Endothelial cell of umbilical vein (primary cell): ENCODE measurements at regions of chr11 and their contacts with region 1.

Region 1: GRCh38 chr11:32615422-32615821 is 31.8 kb downstream of the EIF3M start:
- DNase-seq: peak; percentile 17
- H3K4me3 ChIP-seq: no peak overlapping the region
- H3K27ac ChIP-seq: no peak overlapping the region
- H3K4me1 ChIP-seq: no peaks in the 10 kb centered on the region
- H3K27me3 ChIP-seq: no peaks in the 10 kb centered on the region
- CTCF ChIP-seq: no peak
- POLR2A ChIP-seq: no peak

Region 2: GRCh38 chr11:32323814-32324130 is 291.6 kb before region 1 on chr11:
- CTCF ChIA-PET with region 1: interaction called, 17 read pairs
- POLR2A ChIA-PET with region 1: no interaction called
- dilution Hi-C with region 1: no loop called
- intact Hi-C with region 1: loop called (anchors 2 kb)
- DNase-seq: no peak
- H3K4me3 ChIP-seq: no peak overlapping the region
- H3K27ac ChIP-seq: no peak overlapping the region
- H3K4me1 ChIP-seq: no peaks in the 10 kb centered on the region
- H3K27me3 ChIP-seq: peaks cover 0 to 5% of the 10 kb centered on the region in 2 experiments
- CTCF ChIP-seq: no peak
- POLR2A ChIP-seq: no peak

Region 3: DNA sequence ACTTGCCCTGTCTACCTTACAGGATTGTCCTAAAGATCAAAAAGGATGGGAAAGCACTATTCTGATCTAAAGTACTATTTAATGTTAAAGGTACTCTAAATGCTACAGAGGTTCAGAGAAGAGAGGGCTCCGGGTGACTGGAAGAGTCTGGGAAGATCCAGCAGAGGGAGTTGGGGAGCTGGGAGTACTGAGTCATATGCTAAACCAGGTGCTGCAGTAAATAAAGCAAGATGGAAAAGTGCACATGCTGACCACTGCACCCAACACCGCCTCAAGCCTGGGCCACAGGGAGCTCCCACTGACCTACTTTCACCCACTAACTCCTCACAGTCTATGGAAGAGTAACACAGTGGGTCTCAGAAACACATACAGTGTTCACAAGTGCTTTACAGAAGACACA is 229.4 kb before region 1 on chr11:
- CTCF ChIA-PET with region 1: interaction called, 12 read pairs
- POLR2A ChIA-PET with region 1: no interaction called
- dilution Hi-C with region 1: no loop called
- intact Hi-C with region 1: no loop called
- DNase-seq: peak; percentile 14
- H3K4me3 ChIP-seq: no peak overlapping the region
- H3K27ac ChIP-seq: no peak overlapping the region
- H3K4me1 ChIP-seq: no peaks in the 10 kb centered on the region
- H3K27me3 ChIP-seq: no peaks in the 10 kb centered on the region
- CTCF ChIP-seq: peak; percentile 21 to 38
- POLR2A ChIP-seq: no peak

Region 4: GRCh38 chr11:32538804-32539203 is 76.6 kb before region 1 on chr11:
- CTCF ChIA-PET with region 1: no interaction called
- POLR2A ChIA-PET with region 1: no interaction called
- dilution Hi-C with region 1: no loop called
- intact Hi-C with region 1: no loop called
- DNase-seq: no peak
- H3K4me3 ChIP-seq: no peak overlapping the region
- H3K27ac ChIP-seq: no peak overlapping the region
- H3K4me1 ChIP-seq: no peaks in the 10 kb centered on the region
- H3K27me3 ChIP-seq: no peaks in the 10 kb centered on the region
- CTCF ChIP-seq: no peak
- POLR2A ChIP-seq: no peak